Activated CD4-positive, alpha-beta T cell treated with anti-CD3 and anti-CD28 coated beads for 36 hours (primary cell): ENCODE measurements at regions of chr16 and their contacts with region 1.

Region 1: DNA sequence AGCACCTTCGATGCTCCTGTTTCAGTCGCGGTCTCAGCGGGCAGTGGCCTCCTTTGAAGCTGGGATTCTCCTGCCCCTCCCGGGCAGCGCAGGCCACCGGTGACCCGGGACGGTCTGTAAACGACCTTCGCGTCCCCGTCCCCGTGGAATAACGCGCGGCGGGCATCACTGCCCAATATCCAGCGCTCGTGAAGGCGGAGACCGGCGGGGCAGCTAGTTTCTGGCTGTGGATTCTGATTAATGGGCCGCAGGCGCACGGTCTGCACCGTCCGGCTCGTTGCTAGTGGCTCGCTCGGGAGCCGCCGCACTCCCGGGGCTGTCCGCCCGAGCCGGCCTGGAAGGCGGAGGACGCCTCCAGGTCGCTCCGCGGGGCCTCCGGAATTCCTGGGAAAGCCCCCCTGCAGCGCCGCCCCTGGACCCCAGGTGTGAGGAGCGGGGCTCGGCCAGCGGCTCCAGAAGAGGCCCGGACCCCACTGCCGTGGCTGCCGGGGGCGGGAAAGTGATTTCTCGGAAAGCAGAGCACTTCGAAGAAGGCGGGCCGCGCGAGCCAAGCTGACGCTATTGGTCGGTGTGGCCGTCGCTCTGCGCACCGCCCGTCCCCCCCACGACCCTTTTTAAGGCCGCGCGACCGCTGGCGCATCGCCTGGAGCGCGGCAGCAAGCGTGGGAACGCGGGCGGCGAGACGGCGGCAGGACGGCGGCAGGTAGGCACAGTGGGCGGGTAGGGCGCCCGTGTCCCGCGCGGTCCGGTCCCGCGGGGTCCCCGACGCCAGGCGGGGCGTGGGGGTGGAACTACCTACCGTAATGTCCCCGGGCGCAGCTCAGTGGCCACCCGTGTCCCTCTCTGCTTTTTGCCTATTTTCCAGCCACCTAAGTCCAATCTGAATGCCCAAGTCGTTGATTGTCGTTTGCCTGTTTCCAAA is at the start of gene IRF8:
- DNase-seq: peak; percentile 92
- ATAC-seq: peak; percentile 81
- H3K4me3 Mint-ChIP-seq: peak within 1 kb of the TSS; percentile 78
- H3K27ac Mint-ChIP-seq: peak within 1 kb of the TSS; percentile 92
- H3K4me1 Mint-ChIP-seq: peaks cover 47% of the 10 kb centered on the region
- H3K27me3 Mint-ChIP-seq: peaks cover 3% of the 10 kb centered on the region
- total RNA-seq, gene IRF8: 227 to 250 TPM

Region 2: DNA sequence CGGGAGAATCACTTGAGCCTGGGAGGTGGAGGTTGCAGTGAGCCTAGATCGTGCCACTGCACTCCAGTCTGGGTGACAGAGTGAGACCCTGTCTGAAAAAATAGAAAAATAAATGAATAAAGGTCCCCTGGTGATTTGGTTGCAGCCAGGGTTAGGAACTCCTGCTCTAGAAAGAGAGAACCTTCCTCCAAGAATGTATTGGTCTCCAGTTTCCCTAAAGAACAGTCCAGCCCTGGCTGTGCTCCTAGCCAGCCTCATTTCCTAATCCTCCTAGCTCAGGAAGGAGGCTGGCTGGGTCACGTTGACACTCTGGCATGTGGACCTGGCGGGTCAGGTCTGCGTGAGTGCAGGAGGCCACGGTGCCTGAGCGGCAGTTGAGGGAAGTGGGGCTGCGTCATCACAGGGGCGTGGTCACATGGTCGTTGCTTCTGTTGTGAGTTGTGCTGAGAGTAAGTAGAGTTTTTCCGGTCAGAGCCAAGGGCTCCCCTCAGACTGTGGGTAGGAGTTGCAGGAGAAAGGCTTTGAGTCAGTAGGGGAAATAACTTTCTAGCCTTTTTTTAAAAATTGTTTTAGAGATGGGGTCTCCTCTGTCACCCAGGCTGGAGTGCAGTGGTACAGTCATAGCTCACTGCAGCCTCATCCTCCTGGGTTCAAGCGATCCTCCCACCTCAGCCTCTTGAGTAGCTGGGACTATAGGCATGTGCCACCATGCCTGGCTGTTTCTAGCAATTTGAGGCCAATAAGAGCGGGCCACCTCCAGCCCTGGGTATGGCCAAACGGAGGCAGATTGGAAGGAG is 592.6 kb before region 1 on chr16:
- CTCF ChIA-PET with region 1: no interaction called
- POLR2A ChIA-PET with region 1: no interaction called
- intact Hi-C with region 1: no loop called
- DNase-seq: peak; percentile 95
- ATAC-seq: peak; percentile 94
- H3K4me3 Mint-ChIP-seq: no peak overlapping the region
- H3K27ac Mint-ChIP-seq: peak overlapping the region; percentile 89
- H3K4me1 Mint-ChIP-seq: peaks cover 55% of the 10 kb centered on the region
- H3K27me3 Mint-ChIP-seq: no peaks in the 10 kb centered on the region

Region 3: DNA sequence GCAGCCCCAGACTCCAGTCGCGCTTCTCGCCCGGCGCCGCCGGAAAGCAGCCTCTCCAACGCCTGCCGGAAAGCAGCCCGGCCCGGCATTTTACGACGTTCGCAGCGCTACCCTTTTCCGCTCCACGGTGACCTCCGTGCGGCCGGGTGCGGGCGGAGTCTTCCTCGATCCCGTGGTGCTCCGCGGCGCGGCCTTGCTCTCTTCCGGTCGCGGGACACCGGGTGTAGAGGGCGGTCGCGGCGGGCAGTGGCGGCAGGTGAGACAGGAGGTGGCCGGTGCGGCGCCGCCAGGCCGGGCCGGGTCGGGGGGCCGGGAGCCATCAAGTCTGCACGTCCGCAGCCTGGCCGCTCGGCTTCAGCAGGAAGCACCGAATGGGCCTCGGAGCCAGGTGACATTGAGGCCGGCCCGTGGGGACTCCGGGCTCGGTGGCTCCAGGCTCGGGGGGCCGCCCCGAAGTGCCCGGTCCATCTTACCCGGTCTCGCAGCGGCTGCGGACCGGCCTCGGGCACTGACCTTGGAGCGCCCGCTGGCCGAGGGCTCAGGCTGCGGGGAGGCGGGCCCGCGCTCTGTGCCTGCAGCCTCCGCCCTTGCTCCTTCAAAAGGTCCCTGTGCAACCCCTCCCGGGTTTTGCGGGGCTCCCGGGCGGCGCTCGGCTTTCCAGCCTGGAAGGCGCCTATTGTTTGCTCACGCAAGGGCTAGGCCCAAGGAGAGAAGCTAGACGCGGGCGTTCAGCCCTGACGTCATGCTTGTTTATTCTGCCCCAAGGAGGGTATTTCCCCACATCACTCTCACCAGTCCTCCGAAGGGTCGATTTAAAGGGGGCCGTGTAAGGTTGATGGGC is 99.1 kb before region 1 on chr16 and contains the starts of genes COX4I1 and EMC8:
- CTCF ChIA-PET with region 1: interaction called, 5 read pairs
- POLR2A ChIA-PET with region 1: no interaction called
- intact Hi-C with region 1: loop called in 1 of 2 experiments (anchors 1 kb)
- DNase-seq: peak; percentile 97
- ATAC-seq: peak; percentile 95
- H3K4me3 Mint-ChIP-seq: peak within 1 kb of the TSS; percentile 85
- H3K27ac Mint-ChIP-seq: peak within 1 kb of the TSS; percentile 89
- H3K4me1 Mint-ChIP-seq: peaks cover 60% of the 10 kb centered on the region
- H3K27me3 Mint-ChIP-seq: no peaks in the 10 kb centered on the region
- total RNA-seq, gene COX4I1: 374 to 508 TPM
- total RNA-seq, gene EMC8: 30.4 to 32.9 TPM

Region 4: GRCh38 chr16:85908889-85909589 is 10.3 kb after region 1 on chr16:
- CTCF ChIA-PET with region 1: interaction called, 11 read pairs
- POLR2A ChIA-PET with region 1: interaction called, 4 read pairs
- intact Hi-C with region 1: no loop called
- DNase-seq: no peak
- ATAC-seq: no peak
- H3K4me3 Mint-ChIP-seq: no peak overlapping the region
- H3K27ac Mint-ChIP-seq: peak overlapping the region; percentile 40
- H3K4me1 Mint-ChIP-seq: peaks cover 42% of the 10 kb centered on the region
- H3K27me3 Mint-ChIP-seq: no peaks in the 10 kb centered on the region

Region 5: DNA sequence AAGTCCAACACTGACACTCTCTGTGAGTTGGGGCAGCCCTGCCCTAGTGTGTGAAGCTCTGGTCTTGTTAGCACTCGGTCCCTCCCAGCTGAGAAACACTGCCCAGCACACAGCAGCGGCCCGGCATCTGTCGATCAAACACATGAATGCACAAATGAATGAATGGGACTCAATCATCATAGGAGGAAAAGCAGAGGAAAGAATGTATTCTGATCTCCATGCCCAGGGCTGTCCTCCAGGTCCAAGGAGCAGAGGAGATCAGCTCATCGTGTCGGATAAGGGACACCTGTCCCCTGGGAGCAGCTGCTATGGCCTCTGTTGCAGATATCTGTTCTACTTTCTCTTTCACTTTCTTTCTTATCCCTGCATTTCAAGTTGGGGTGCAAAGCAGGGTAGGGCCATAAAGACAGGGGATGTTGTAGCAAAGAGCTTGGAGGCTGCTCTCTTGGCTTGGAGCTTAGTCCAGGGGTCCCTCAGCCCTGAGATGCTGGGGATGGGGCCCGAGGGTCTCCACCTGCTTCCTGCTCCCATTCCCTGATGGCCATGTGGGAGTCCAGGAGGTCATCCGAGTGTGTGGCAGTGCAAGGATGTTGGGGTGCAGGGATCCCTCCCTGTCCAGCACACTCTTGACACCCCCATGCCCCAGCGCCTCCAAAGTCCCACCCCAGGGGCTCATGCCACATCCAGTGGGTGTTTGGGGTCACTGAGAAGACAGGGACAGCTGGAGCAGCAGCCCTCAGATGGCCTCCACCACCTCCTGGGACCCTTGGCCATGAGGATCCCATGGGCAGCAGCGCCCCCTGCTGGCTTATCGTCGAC is 88.4 kb after region 1 on chr16:
- CTCF ChIA-PET with region 1: interaction called, 8 read pairs
- POLR2A ChIA-PET with region 1: interaction called, 5 read pairs
- intact Hi-C with region 1: loop called (anchors 1 to 5 kb)
- DNase-seq: peak; percentile 76
- ATAC-seq: peak; percentile 16
- H3K4me3 Mint-ChIP-seq: no peak overlapping the region
- H3K27ac Mint-ChIP-seq: peak overlapping the region; percentile 99
- H3K4me1 Mint-ChIP-seq: peaks cover 78% of the 10 kb centered on the region
- H3K27me3 Mint-ChIP-seq: no peaks in the 10 kb centered on the region

Region 6: DNA sequence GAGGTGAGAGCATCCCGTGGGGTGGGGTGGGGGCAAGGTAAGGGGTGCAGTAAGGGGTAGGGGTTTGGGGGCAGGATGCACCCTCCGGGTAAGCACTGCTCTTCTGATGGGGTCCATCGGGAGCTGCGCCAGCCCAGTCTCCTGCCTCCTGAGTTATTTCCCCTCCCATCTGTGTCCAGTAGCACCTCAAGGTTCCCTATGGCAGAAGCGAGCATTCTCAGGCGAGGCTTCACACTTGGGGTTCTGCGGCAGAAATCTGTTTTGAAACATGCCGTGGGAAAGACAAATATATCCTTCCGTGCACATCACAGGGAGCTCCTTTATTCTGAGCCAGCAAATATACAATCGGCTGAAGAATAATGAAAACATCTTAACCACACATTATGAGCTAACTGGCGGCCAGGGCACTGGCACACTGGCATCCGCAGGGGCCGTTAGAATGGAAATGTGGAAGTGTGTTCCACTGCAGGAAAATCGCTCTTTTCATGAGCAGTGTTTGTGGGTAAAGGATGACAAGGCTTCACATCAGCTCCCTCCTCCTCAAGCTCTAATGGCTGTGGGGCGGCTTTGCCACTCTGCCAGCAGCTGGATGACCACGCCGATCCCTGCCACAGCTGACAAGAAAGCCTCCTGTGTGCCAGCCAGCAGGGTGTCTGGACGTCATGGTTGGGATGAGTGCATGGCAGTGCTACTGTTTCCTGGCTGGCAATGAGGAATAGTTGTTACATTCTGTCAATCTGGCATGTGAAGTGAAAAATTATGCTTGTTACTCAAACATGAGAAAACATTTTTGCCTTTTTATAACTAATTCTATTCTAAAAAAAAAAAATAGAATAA is 636.2 kb after region 1 on chr16:
- CTCF ChIA-PET with region 1: no interaction called
- POLR2A ChIA-PET with region 1: no interaction called
- intact Hi-C with region 1: no loop called
- DNase-seq: no peak
- ATAC-seq: no peak
- H3K4me3 Mint-ChIP-seq: no peak overlapping the region
- H3K27ac Mint-ChIP-seq: no peak overlapping the region
- H3K4me1 Mint-ChIP-seq: no peaks in the 10 kb centered on the region
- H3K27me3 Mint-ChIP-seq: no peaks in the 10 kb centered on the region